PC-9 (cell line): ENCODE measurements at regions of chr17 and their contacts with region 1.

Region 1: DNA sequence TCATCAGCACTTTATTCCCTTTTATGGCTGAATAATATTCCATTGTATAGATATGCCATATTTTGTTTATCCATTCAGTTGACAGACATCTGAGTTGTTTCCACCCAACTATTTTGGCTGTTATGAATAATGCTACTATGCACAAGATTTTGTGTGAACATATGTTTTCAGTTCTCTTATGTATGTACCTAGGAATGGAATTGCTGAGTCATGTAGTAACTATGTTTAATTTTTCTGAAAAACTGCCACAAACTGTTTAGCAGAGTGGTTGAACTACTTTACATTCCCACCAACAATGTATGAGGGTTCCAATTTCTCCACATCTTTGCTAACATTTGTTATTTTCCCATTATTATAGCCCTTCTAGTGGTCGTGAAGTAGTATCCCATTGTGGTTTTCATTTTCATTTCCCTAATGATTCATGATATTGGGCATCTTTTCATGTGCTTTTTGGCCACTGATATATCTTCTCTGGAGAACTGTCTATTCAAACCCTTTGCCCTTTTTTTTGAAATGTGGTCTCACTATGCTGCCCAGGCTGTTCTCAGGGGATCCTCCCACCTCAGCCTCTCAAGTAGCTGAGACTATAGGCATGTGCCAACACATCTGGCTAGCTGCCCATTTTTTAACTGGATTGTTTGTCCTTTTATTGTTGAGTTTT is 26.3 kb downstream of the SMURF2 start:
- DNase-seq: peak in 1 of 2 experiments; percentile 36
- H3K4me3 ChIP-seq: no peak overlapping the region
- H3K27ac ChIP-seq: peak overlapping the region; percentile 61
- H3K4me1 ChIP-seq: peaks cover 35% of the 10 kb centered on the region
- H3K27me3 ChIP-seq: no peaks in the 10 kb centered on the region
- CTCF ChIP-seq: no peak

Region 2: GRCh38 chr17:64418506-64419339 is 217.1 kb before region 1 on chr17:
- CTCF ChIA-PET with region 1: no interaction called
- POLR2A ChIA-PET with region 1: no interaction called
- intact Hi-C with region 1: no loop called
- DNase-seq: no peak
- H3K4me3 ChIP-seq: no peak overlapping the region
- H3K27ac ChIP-seq: 0 out of 2 replicates have a peak overlapping the region, but pooled peaks have one; percentile 5
- H3K4me1 ChIP-seq: peaks cover 6% of the 10 kb centered on the region
- H3K27me3 ChIP-seq: no peaks in the 10 kb centered on the region
- CTCF ChIP-seq: peak; percentile 79

Region 3: DNA sequence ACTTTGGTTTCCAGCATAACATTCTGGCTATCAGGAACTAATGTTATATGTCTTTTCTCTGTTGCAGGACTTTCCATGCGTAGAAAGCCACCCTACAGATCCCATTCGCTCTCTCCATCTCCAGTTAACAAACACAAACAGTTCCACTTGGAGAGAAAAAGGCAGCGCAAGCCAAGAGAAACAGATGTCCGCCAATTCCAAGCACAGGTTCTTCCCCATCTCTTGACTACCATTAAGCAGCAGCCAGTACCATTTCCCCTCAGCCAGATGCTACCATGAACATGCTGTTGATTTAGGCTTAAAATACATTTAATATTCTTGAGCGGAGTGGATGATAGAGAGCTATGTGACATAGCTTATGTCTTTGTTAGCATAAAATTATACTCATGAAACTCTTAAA is 106.6 kb before region 1 on chr17:
- CTCF ChIA-PET with region 1: no interaction called
- POLR2A ChIA-PET with region 1: no interaction called
- intact Hi-C with region 1: no loop called
- DNase-seq: no peak
- H3K4me3 ChIP-seq: no peak overlapping the region
- H3K27ac ChIP-seq: no peak overlapping the region
- H3K4me1 ChIP-seq: no peaks in the 10 kb centered on the region
- H3K27me3 ChIP-seq: no peaks in the 10 kb centered on the region
- CTCF ChIP-seq: no peak

Region 4: DNA sequence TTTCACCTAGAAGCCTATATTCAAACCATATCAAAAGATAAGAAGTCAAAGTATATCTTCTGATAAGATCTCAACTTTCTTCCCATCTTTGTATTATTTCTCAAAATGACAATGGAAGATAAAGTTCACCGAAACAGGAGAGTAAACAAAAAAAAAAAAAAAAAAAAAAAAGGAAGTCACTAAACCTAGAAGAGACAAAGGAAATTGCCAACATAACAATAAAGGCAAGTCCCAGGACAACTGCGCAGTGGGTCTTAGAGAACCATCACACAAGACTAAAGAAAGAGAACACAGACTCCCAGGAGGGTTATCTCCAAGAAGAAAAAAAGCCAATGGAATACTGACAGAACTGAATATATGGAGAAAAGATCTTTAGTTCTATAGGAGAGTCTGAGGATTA is 39.3 kb before region 1 on chr17:
- CTCF ChIA-PET with region 1: no interaction called
- POLR2A ChIA-PET with region 1: no interaction called
- intact Hi-C with region 1: no loop called
- DNase-seq: no peak
- H3K4me3 ChIP-seq: no peak overlapping the region
- H3K27ac ChIP-seq: no peak overlapping the region
- H3K4me1 ChIP-seq: no peaks in the 10 kb centered on the region
- H3K27me3 ChIP-seq: no peaks in the 10 kb centered on the region
- CTCF ChIP-seq: no peak

Region 5: DNA sequence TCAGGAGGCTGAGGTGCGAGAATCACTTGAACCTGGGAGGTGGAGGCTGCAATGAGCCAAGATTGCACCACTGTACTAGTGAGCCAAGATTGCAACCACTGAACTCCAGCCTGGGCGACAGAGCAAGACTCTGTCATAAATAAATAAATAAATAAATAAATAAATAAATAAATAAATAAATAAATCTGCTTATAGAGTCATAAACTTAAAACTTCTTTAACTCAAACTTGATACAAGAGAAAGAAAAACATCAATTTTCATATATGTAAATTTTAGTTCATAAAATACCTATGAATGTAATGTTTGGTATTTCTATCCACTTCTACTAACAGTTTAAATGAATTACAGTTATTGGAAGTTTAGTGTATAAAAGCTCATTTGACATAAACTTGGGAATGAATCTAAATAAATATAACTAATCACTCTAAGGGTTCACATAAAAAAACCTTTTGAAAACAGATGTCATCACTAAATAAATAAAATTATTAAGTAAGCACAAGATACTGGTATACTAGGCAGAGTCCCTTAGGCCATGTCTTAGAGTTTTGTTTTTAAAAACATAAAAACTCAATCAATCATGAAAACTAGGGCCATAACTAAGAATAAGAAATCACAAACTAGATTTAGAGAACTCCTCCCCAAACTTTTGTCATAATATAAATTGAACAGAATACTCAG is 27.8 kb before region 1 on chr17:
- CTCF ChIA-PET with region 1: interaction called, 12 read pairs
- POLR2A ChIA-PET with region 1: no interaction called
- intact Hi-C with region 1: no loop called
- DNase-seq: no peak
- H3K4me3 ChIP-seq: no peak overlapping the region
- H3K27ac ChIP-seq: peak overlapping the region; percentile 47; the same call in 1 of the 2 replicates
- H3K4me1 ChIP-seq: no peaks in the 10 kb centered on the region
- H3K27me3 ChIP-seq: no peaks in the 10 kb centered on the region
- CTCF ChIP-seq: no peak

Region 6: DNA sequence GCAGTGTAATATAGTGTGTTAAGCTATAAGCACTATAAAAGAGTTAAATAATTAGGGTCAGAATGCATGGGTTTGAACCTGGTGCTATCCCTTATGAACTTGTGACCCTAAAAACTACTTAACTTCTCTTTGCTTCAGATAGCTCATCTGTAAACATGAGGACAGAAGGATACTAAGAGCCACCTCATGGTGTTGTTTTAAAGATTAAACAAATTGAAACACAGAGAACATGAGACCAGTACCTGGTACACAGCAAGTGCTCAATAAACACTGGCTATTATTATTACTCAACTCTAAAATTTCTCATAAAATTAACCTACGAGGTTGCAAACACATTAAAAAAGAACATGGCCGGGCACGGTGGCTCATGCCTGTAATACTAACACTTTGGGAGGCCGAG is 16.9 kb before region 1 on chr17:
- CTCF ChIA-PET with region 1: interaction called, 11 read pairs
- POLR2A ChIA-PET with region 1: no interaction called
- intact Hi-C with region 1: no loop called
- DNase-seq: no peak
- H3K4me3 ChIP-seq: no peak overlapping the region
- H3K27ac ChIP-seq: no peak overlapping the region; the same call in 1 of the 2 replicates
- H3K4me1 ChIP-seq: peaks cover 13% of the 10 kb centered on the region
- H3K27me3 ChIP-seq: no peaks in the 10 kb centered on the region
- CTCF ChIP-seq: no peak